CD4-positive, alpha-beta memory T cell (primary cell): ENCODE measurements at regions of chr5 and their contacts with region 1.

Region 1: GRCh38 chr5:177362610-177363507 is 5.1 kb downstream of the RGS14 start:
- DNase-seq: peak; percentile 54 to 86 (median 61)
- H3K4me3 ChIP-seq: peak overlapping the region; percentile 11 to 52
- H3K4me3 Mint-ChIP-seq: peak overlapping the region; percentile 81 to 89 (median 85)
- H3K27ac ChIP-seq: peak overlapping the region; percentile 81
- H3K27ac Mint-ChIP-seq: peak overlapping the region; percentile 86 to 97 (median 92)
- H3K4me1 ChIP-seq: peaks cover 81% of the 10 kb centered on the region
- H3K4me1 Mint-ChIP-seq: peaks cover 40 to 76% (median 59%) of the 10 kb centered on the region in 4 donors
- H3K27me3 ChIP-seq: no peaks in the 10 kb centered on the region
- H3K27me3 Mint-ChIP-seq: no peaks in the 10 kb centered on the region

Region 2: GRCh38 chr5:177290816-177291596 is 71.9 kb before region 1 on chr5:
- CTCF ChIA-PET with region 1: no interaction called
- POLR2A ChIA-PET with region 1: no interaction called
- intact Hi-C with region 1: no loop called
- DNase-seq: no peak
- H3K4me3 ChIP-seq: no peak overlapping the region
- H3K4me3 Mint-ChIP-seq: no peak overlapping the region
- H3K27ac ChIP-seq: no peak overlapping the region
- H3K27ac Mint-ChIP-seq: no peak overlapping the region
- H3K4me1 ChIP-seq: peaks cover 4% of the 10 kb centered on the region
- H3K4me1 Mint-ChIP-seq: peaks cover 9 to 19% (median 10%) of the 10 kb centered on the region in 4 donors
- H3K27me3 ChIP-seq: no peaks in the 10 kb centered on the region
- H3K27me3 Mint-ChIP-seq: no peaks in the 10 kb centered on the region

Region 3: DNA sequence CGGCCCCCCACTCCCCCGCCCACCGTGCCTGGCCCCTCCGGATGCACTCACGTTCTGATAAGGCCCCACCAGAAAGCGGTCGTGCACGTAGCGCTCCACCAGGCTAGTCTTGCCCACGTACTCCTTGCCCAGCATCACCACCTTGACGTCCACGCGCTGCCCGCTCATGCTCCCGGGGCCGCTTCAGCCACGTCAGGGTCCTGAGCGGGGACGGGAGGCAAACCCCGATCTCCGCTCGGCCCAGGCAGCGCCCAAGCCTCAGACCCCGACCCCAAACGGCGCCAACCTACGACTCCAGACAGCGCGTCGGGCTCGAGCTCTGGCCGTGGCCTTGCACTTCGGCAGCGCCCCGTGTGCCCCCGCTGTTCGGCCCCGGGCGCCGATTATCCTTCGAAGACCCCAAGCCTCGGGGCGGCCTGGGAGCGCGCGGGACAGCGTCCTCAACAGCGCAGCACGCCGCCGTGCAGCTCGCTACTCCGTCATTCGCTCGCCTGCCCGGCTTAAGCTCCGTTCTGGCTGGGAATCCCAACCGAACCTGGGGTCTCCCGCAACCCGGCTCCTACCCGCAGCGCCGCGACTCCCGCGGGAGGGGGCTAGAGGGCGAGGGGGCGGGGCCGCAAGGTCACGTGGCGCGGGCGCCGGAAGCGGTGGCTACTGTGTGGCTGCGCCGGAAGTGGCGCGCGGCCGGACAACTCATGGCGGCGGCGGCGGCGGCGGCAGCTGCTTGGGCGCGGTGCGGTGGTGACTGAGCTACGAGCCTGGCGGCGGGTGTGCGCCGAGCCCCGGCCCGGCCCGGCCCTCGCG is 59.5 kb before region 1 on chr5 and contains the starts of genes PRELID1 and RAB24:
- CTCF ChIA-PET with region 1: no interaction called
- POLR2A ChIA-PET with region 1: interaction called, 3 read pairs
- intact Hi-C with region 1: loop called (anchors 5 kb)
- DNase-seq: peak; percentile 84 to 88 (median 86)
- H3K4me3 ChIP-seq: peak within 1 kb of the TSS; percentile 84 to 94
- H3K4me3 Mint-ChIP-seq: peak within 1 kb of the TSS; percentile 91 to 97 (median 95)
- H3K27ac ChIP-seq: peak within 1 kb of the TSS; percentile 78
- H3K27ac Mint-ChIP-seq: peak within 1 kb of the TSS; percentile 84 to 97 (median 92)
- H3K4me1 ChIP-seq: peaks cover 68% of the 10 kb centered on the region
- H3K4me1 Mint-ChIP-seq: peaks cover 48 to 86% (median 69%) of the 10 kb centered on the region in 4 donors
- H3K27me3 ChIP-seq: no peaks in the 10 kb centered on the region
- H3K27me3 Mint-ChIP-seq: no peaks in the 10 kb centered on the region
- total RNA-seq, gene PRELID1: 70.9 to 72.1 TPM
- total RNA-seq, gene RAB24: 19.8 to 20.5 TPM

Region 4: DNA sequence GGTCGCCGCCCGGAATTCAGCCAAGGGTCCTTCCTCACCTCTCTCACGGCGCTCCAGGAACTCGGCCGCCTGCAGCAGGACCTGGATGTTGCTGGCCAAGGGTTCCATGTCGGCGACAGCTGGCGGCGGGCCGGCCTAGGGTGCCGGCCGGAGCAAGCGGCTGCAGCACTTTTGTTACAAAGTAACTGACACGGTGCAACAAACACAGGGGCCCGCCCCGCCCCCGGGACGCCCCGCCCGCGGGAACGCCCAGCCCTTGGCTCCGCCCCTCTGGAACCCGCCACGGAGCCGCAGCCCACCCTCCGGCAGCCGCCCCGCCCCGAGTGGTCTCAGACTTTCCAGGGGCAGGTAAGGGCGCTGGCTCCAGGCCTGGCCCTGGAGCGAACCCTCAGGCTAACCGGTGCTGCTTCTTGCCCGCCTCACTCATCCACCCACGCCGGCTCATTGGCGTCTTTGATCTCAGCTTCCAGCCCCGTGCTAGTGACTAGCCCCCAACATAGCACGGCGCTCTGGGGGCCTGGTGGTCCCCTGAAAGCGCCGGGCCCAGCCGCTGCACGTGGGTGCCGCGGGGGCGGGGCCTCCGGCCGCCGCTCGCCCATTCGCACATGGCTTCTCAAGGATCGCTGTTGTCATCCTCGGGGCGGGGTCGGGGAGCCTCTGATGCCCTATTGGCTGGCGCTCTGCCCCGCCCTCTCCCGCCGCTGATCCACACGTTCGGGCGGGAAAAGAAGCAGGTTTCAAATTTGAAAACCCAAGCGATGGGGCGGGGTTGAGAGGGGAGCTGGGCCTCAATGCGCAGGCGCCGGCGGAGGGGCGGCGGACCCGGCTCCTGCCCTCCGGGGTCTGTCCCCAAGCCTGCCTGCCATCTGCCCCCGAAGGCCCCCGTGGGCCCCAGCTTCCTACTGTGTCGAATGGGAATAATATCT is 50.9 kb before region 1 on chr5 and contains the start of gene MXD3:
- CTCF ChIA-PET with region 1: interaction called, 14 read pairs
- POLR2A ChIA-PET with region 1: interaction called, 6 read pairs
- intact Hi-C with region 1: no loop called
- DNase-seq: peak; percentile 90 to 96 (median 93)
- H3K4me3 ChIP-seq: peak within 1 kb of the TSS; percentile 24 to 64
- H3K4me3 Mint-ChIP-seq: peak within 1 kb of the TSS; percentile 70 to 86 (median 80)
- H3K27ac ChIP-seq: peak within 1 kb of the TSS; percentile 49
- H3K27ac Mint-ChIP-seq: peak within 1 kb of the TSS; percentile 29 to 83 (median 75)
- H3K4me1 ChIP-seq: peaks cover 41% of the 10 kb centered on the region
- H3K4me1 Mint-ChIP-seq: peaks cover 17 to 49% (median 30%) of the 10 kb centered on the region in 4 donors
- H3K27me3 ChIP-seq: no peaks in the 10 kb centered on the region
- H3K27me3 Mint-ChIP-seq: no peaks in the 10 kb centered on the region
- total RNA-seq, gene MXD3: 17.3 TPM